Activated CD4-positive, alpha-beta memory T cell treated with anti-CD3 and anti-CD28 coated beads, Interleukin-2, amount 10 ng/mL, durations not matched to agents 7 days and 5 days (primary cell): ENCODE measurements at regions of chr2 and their contacts with region 1.

Region 1: GRCh38 chr2:134218930-134219658 is 34.8 kb upstream of the MGAT5 start:
- DNase-seq: peak; percentile 36
- H3K4me3 Mint-ChIP-seq: no peak overlapping the region
- H3K27ac Mint-ChIP-seq: peak overlapping the region; percentile 44
- H3K4me1 Mint-ChIP-seq: peaks cover 46% of the 10 kb centered on the region
- H3K27me3 Mint-ChIP-seq: no peaks in the 10 kb centered on the region

Region 2: DNA sequence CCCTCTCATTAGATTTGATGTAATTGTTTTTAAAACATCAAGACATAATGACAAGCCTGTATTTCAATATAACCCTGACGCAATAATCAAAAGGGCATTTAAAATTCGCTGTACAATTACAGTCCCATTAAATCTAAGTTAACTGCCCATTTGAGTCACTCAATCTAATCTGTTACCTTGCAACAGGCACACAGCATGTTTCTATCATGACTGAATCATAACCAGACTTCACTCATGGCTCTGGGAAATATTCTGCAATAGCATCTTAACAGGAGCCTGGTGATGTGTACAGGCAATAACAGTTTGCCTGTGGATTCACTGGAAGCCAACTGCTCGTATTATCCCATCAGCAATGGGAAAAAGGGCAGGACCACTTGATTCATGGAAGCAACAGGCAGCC is 508.5 kb before region 1 on chr2:
- CTCF ChIA-PET with region 1: no interaction called
- POLR2A ChIA-PET with region 1: no interaction called
- DNase-seq: no peak
- H3K4me3 Mint-ChIP-seq: no peak overlapping the region
- H3K27ac Mint-ChIP-seq: no peak overlapping the region
- H3K4me1 Mint-ChIP-seq: no peaks in the 10 kb centered on the region
- H3K27me3 Mint-ChIP-seq: no peaks in the 10 kb centered on the region

Region 3: GRCh38 chr2:134207564-134208209 is 11.4 kb before region 1 on chr2:
- CTCF ChIA-PET with region 1: interaction called, 30 read pairs
- POLR2A ChIA-PET with region 1: interaction called, 6 read pairs
- DNase-seq: peak; percentile 63
- H3K4me3 Mint-ChIP-seq: no peak overlapping the region
- H3K27ac Mint-ChIP-seq: no peak overlapping the region
- H3K4me1 Mint-ChIP-seq: peaks cover 6% of the 10 kb centered on the region
- H3K27me3 Mint-ChIP-seq: no peaks in the 10 kb centered on the region

Region 4: DNA sequence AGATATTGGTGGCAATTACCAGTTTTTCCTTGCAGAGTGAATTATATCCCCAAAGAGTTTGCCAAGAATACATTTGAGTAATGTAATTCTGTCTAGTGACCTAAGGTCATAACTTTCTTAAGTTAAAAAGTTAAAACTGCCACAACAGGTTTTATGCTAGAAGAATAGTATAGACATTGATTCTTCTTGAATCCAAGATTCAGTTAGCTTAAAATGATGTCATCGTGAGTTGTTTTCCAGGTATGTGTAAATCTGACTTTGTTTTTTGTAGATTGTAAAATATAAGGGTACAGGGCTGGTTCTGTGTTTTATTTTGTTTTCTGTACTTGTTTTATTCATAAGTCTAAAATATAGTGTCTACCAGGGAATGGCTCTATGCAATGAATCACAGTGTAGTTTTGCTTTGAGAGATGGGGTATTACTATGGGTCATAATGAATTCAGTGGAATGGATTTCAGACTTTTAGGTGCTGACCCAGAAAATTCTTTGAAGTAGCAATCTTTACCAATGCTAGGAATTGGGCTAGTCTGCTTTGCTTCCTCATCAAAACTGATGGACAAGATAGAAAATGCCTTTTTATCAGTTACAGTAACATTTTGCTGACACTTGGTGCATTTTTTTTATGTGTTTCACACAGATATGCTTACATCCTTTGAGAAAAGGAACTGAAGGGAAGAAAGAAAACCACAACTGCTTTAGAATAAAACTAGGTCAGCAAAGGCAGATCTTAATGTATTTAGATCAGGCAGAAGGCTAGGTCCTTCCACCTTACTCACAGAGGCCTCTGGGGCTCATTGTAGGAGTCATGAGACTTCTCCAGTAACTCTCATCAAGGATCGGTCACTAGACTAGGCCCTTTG is 14.0 kb after region 1 on chr2:
- CTCF ChIA-PET with region 1: interaction called, 10 read pairs
- POLR2A ChIA-PET with region 1: interaction called, 21 read pairs
- DNase-seq: peak; percentile 33
- H3K4me3 Mint-ChIP-seq: peak overlapping the region; percentile 27
- H3K27ac Mint-ChIP-seq: peak overlapping the region; percentile 91
- H3K4me1 Mint-ChIP-seq: peaks cover 75% of the 10 kb centered on the region
- H3K27me3 Mint-ChIP-seq: no peaks in the 10 kb centered on the region

Region 5: DNA sequence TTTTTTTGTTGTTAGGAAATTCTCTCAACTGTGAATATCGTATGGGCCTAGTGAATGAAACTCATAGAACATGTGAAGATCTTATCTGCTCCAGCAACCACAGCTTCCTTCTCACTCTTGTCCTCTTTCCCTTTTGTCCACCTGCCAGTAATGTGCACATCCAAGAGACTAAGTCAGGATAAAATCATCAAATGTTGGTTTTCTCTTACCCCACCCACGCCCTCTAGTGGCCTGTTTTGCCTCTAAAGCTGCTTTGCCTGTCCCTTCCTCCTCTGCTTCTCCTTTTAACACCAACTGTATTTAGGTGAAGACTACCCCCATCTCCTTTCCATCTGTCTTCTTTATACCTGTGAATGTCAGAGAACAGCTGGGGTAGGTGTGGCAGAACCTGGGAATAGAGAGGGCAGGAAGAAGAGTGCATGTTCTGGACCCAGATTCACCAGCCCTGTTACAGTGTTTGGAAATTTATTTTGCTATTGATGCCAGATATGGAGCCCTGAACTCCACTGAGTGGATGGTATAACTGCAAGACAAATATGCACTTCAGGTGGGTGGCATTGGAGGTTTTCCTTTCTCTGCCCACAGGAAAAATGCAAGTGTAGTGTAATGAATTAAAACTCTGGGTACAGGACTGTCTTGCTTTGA is 26.4 kb after region 1 on chr2:
- CTCF ChIA-PET with region 1: interaction called, 13 read pairs
- POLR2A ChIA-PET with region 1: no interaction called
- DNase-seq: peak; percentile 76
- H3K4me3 Mint-ChIP-seq: no peak overlapping the region
- H3K27ac Mint-ChIP-seq: no peak overlapping the region
- H3K4me1 Mint-ChIP-seq: peaks cover 62% of the 10 kb centered on the region
- H3K27me3 Mint-ChIP-seq: peaks cover 32% of the 10 kb centered on the region